ENCODE measurements at regions of chr2 and their contacts with region 1.

Region 1: DNA sequence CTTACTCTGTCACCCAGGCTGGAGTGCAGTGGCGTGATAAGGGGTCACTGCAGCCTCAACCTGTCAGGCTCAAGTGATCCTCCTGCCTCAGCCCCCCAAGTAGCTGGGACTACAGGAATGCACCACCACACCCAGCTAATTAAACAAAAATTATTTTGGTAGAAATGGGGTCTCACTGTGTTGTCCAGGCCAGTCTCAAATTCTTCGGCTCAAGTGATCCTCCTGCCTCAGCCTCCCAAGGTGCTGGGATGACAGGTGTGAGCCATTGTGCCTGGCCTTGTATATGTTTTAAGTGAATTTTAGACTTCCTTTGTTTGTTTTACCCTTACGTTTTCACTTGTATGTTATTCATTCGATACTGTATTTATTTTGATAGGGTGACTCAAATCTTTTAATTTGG is 34.7 kb upstream of the ITSN2 start:
- DNase-seq: no peak
- ATAC-seq: no peak
- H3K4me3 ChIP-seq: no peak overlapping the region
- H3K4me3 Mint-ChIP-seq: no peak overlapping the region
- H3K27ac ChIP-seq: no peak overlapping the region
- H3K27ac Mint-ChIP-seq: no peak overlapping the region
- H3K4me1 ChIP-seq: no peaks in the 10 kb centered on the region
- H3K4me1 Mint-ChIP-seq: no peaks in the 10 kb centered on the region
- H3K27me3 ChIP-seq: no peaks in the 10 kb centered on the region
- H3K27me3 Mint-ChIP-seq: peaks cover 0 to 2% of the 10 kb centered on the region in 2 donors

Region 2: DNA sequence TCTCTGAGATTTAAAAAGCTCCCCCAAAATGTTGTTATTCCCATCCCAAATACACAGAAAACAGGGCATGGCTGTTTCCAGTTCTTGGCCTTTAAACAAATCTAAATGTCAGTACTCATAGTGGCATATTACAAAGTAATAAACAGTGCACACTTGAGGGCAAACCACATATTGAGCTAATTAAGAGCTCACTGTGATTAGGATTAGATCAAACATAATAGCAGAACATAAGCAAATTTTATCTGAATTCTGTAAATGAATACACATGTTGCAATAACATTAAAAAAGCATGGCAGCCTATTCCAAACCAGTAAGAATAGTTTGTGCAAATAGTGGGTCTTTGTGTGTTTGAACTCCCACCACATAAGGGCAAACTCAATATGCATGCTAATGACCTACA is 153.5 kb before region 1 on chr2:
- CTCF ChIA-PET with region 1: no interaction called
- POLR2A ChIA-PET with region 1: interaction called in 1 of 2 experiments, 14 read pairs
- DNase-seq: no peak
- ATAC-seq: no peak
- H3K4me3 ChIP-seq: no peak overlapping the region
- H3K4me3 Mint-ChIP-seq: no peak overlapping the region
- H3K27ac ChIP-seq: no peak overlapping the region
- H3K27ac Mint-ChIP-seq: peak overlapping the region in 1 of 2 donors; percentile 24
- H3K4me1 ChIP-seq: no peaks in the 10 kb centered on the region
- H3K4me1 Mint-ChIP-seq: no peaks in the 10 kb centered on the region
- H3K27me3 ChIP-seq: no peaks in the 10 kb centered on the region
- H3K27me3 Mint-ChIP-seq: no peaks in the 10 kb centered on the region

Measured in T-cell (primary cell).